Activated T-helper 2 cell treated with anti-CD3 and anti-CD28 coated beads, Interferon-gamma antibody, Interleukin-2, Interleukin-4, amounts not matched to agents 10 μg/mL and 5 μg/mL and 100 μg/mL, durations not matched to agents 14 hours and 24 hours and 36 hours (primary cell): ENCODE measurements at regions of chr7 and their contacts with region 1.

Region 1: DNA sequence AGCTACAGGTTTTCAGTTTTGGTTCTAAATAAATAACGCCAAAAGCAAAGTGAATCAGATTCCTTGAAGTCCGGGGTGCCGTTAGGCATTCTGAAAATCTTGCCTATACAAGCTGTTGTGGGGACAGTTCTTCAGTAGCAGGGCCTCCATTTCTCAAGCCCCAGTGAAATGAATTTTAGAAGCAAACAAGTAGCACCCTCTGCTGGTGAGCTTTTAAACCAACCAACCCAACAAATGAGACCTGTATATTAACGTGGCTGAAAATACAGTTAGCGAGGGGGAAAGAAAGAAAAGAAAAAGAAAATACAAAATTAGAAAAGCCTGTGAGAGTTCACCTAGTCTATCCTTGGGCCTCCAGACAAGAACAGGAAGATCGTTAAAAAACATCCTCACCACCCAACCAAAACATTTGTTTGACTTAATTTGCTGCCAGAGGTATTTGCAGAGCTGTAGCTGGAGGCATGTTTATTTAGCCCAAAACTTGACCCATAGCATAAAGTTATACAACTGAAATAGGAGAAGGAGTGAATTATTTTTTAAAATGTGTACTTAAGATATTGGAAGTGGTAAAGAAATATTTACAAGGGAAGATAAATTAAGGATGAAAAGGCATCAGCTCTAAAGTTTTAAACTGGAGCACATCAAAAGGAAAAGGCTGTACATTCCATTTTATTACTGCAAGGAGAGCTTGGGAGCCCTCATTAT is 98.9 kb downstream of the DYNC1I1 start:
- DNase-seq: no peak
- H3K4me3 Mint-ChIP-seq: no peak overlapping the region
- H3K27ac Mint-ChIP-seq: no peak overlapping the region
- H3K4me1 Mint-ChIP-seq: no peaks in the 10 kb centered on the region
- H3K27me3 Mint-ChIP-seq: no peaks in the 10 kb centered on the region

Region 2: DNA sequence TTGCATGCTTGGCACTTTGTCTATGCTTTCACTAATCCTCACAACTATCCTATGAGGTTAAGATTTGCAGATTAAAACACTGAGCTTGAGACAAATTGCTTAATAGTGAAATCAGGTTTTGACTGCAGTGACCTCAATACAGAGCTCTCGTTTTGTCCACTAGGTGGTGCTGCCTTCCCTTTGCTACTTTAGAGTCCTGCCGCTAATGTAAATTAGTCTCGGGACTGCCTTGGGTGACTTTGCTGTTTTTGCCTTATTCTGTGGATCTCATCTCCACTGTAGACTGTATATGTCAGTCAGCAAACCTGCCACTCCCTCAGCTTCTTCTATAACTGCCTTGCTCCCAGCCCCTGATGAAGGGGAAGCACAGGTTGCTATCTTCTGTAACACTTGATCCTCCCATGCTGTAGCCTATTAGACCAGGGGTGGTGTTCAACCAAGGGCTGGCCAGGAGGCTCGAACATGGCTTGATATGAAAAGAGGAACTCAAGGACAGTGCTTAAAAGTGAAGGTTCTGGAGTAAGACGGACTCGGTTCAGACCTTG is 359.4 kb before region 1 on chr7:
- intact Hi-C with region 1: loop called (anchors 5 kb)
- DNase-seq: peak; percentile 32
- H3K4me3 Mint-ChIP-seq: no peak overlapping the region
- H3K27ac Mint-ChIP-seq: no peak overlapping the region
- H3K4me1 Mint-ChIP-seq: peaks cover 4% of the 10 kb centered on the region
- H3K27me3 Mint-ChIP-seq: peaks cover 26% of the 10 kb centered on the region

Region 3: DNA sequence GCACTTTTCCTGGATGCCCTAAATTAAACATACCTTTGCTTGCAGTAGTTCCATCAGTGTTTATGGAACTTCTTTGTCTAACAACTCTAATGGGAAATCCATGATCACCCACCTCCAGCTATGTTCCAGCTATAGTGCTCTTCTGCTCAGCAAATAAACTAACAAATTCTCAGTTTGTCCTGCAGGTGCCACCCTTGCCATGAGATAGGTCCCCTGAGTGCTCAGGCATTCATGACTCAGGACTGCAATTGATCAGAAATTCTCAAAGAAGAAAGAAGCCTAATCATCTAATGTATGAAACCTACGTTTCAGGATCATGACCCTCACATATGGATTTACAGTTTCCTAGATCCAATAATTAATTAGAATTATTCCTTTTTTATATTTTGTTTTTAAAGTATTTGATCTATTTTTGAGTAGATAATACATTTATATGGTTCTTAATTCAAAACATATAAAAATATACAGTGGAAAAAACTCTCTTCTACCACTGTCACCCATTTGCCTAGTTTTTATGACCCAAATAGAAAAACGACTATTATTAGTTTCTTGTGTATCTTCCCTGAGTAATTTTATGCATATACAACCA is 147.5 kb before region 1 on chr7:
- intact Hi-C with region 1: loop called (anchors 1 kb)
- DNase-seq: no peak
- H3K4me3 Mint-ChIP-seq: no peak overlapping the region
- H3K27ac Mint-ChIP-seq: no peak overlapping the region
- H3K4me1 Mint-ChIP-seq: no peaks in the 10 kb centered on the region
- H3K27me3 Mint-ChIP-seq: no peaks in the 10 kb centered on the region